Esophagus squamous epithelium (tissue), 5 donors: ENCODE measurements at regions of chr4 and their contacts with region 1.

Region 1: GRCh38 chr4:15956179-15956850 is 6.7 kb downstream of the FGFBP2 start:
- DNase-seq: peak; percentile 43
- H3K4me3 ChIP-seq: no peak overlapping the region
- H3K27ac ChIP-seq: no peak overlapping the region
- H3K4me1 ChIP-seq: peaks cover 0 to 6% (median 0%) of the 10 kb centered on the region in 3 donors
- H3K27me3 ChIP-seq: no peaks in the 10 kb centered on the region
- CTCF ChIP-seq: peak; percentile 68 to 98 (median 96)
- POLR2A ChIP-seq: no peak

Region 2: GRCh38 chr4:15479089-15479912 is 477.0 kb before region 1 on chr4:
- intact Hi-C with region 1: loop called (anchors 5 kb)
- DNase-seq: no peak
- H3K4me3 ChIP-seq: peak overlapping the region; percentile 28 to 68 (median 42)
- H3K27ac ChIP-seq: peak overlapping the region; percentile 72 to 83 (median 76)
- H3K4me1 ChIP-seq: peaks cover 0 to 26% (median 15%) of the 10 kb centered on the region in 3 donors
- H3K27me3 ChIP-seq: no peaks in the 10 kb centered on the region
- CTCF ChIP-seq: peak; percentile 21 to 75 (median 61)
- POLR2A ChIP-seq: no peak

Region 3: DNA sequence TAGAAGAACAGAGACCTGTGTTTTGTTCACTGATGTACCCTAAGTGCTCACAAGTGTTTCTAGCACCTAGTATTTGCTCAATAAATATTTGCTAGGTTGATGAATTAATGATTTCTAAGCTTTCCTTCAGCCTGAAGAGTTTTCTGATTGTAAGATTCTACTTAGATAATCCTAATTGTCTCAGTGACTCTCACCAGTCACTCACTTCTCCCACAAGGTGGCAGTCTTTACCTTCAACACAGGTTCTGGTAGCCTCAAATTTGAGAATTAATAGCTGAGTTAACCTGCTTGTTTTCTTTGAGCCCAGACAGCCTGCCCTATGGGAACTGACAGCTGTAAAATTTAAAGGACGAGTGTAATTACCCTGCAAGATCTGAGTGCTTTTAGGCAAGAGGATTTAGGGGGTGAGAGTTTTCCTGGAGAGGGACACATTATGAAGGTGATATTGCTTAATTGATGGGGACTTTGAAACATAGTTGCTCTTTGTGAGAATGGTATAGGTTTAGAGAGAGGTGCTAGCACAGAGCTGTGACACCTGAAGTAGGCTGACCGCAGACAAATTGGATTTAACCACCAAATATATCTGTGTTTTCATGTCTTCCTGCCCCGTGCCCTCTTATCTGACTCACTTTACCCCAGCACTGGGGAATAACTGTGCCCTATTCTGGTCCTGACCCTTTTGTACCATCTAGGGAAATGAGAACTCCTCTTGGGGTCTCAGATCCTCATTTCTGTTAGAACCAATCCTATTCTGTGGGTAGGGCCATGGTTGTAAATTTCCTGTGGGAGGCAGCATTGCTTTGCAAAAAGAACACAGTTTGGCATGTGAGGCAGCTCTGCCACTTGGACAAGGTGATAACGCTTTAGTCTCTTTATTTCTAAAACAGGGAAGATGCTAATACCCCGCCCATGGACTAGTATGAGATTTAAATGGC is 150.5 kb before region 1 on chr4:
- intact Hi-C with region 1: loop called (anchors 5 kb)
- DNase-seq: no peak
- H3K4me3 ChIP-seq: no peak overlapping the region
- H3K27ac ChIP-seq: peak overlapping the region in 1 of 4 donors; percentile 17
- H3K4me1 ChIP-seq: peaks cover 0 to 20% (median 14%) of the 10 kb centered on the region in 3 donors
- H3K27me3 ChIP-seq: peaks cover 0 to 3% (median 0%) of the 10 kb centered on the region in 4 donors
- CTCF ChIP-seq: peak; percentile 53 to 88 (median 76)
- POLR2A ChIP-seq: no peak

Region 4: DNA sequence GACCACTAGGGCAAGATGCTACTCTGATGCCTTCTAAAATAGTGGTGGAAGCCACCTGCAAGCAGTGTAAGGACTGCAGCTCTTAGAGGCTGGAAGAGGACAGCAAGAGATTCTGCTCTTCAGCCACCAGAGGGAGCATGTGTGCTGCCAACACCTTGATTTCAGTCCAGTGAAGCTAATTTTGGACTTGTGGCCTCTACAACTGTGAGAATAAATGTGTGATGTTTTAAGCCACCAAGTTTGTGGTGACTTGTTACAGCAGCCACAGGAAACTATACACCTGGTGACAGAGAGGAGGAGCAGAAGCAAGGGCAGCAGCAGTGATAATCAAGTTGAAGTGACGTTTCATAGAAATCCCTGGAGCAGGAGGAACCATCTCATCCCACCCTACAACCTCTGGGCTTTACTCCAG is 73.6 kb before region 1 on chr4:
- intact Hi-C with region 1: loop called (anchors 5 kb)
- DNase-seq: no peak
- H3K4me3 ChIP-seq: no peak overlapping the region
- H3K27ac ChIP-seq: no peak overlapping the region
- H3K4me1 ChIP-seq: peaks cover 0 to 18% (median 0%) of the 10 kb centered on the region in 3 donors
- H3K27me3 ChIP-seq: no peaks in the 10 kb centered on the region
- CTCF ChIP-seq: peak; percentile 80 to 94 (median 89)
- POLR2A ChIP-seq: no peak